A549 (cell line): ENCODE measurements at regions of chr20 and their contacts with region 1.

Region 1: GRCh38 chr20:40990542-40991120 is 38.0 kb upstream of the TOP1 start:
- DNase-seq: peak; percentile 85 to 91
- ATAC-seq: peak; percentile 99 to 100
- H3K4me3 ChIP-seq: no peak overlapping the region
- H3K27ac ChIP-seq: peak overlapping the region; percentile 62 to 84; a peak in 5 of 6 replicates
- H3K4me1 ChIP-seq: no peaks in the 10 kb centered on the region
- CTCF ChIP-seq: peak; percentile 85
- EP300 ChIP-seq: no peak
- POLR2A ChIP-seq: no peak
- RAD21 ChIP-seq: peak; percentile 88 to 89

Region 2: DNA sequence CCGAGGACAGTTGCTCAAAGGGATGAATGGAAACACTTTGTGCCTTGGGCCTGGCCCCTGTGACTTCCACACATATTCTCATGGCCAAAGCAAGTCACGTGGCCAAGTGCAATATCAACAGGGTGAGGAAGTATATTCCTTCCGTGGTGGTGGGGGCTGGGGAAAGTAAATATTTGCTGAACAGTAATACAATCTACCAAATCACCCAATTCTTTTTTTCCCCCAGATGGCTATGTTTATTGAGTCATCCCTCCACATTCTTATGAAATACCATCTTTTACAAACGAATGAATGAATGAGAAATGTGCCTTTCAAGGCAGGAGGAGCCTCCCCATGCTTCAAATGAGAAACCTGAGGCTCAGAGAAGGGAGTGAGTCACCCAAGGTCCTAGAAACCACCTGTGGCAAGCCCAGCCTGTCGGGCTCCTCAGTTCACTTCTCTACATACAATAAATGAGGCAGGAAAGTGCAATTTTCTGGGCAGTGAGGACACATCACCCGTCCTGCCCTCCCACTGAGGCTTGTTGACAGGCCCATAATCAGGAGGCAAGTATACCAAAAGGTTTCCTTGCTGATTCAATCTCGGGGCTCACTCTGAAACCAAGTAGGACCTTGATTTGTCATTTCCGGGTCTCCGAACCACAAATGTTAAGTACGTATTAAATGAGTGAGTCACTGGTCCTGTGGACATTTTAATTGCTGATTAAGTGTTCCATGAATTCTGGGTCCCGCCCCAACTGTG is 12.7 kb after region 1 on chr20:
- CTCF ChIA-PET with region 1: interaction called, 35 read pairs
- POLR2A ChIA-PET with region 1: interaction called, 4 read pairs
- DNase-seq: peak; percentile 90 to 92
- ATAC-seq: peak; percentile 86 to 97
- H3K4me3 ChIP-seq: no peak overlapping the region
- H3K27ac ChIP-seq: peak overlapping the region; percentile 84 to 89
- H3K4me1 ChIP-seq: peaks cover 47% of the 10 kb centered on the region
- CTCF ChIP-seq: no peak
- EP300 ChIP-seq: peak; percentile 71 to 82; a peak in 3 of 5 replicates
- POLR2A ChIP-seq: no peak
- RAD21 ChIP-seq: peak in 1 of 2 experiments; percentile 2; a peak in 2 of 5 replicates

Region 3: GRCh38 chr20:41028348-41029148 is 37.9 kb after region 1 on chr20 and contains the start of gene TOP1:
- CTCF ChIA-PET with region 1: interaction called, 28 read pairs
- POLR2A ChIA-PET with region 1: interaction called, 5 read pairs
- DNase-seq: peak; percentile 97 to 100
- ATAC-seq: peak; percentile 95 to 97
- H3K4me3 ChIP-seq: peak within 1 kb of the TSS; percentile 92
- H3K27ac ChIP-seq: peak within 1 kb of the TSS; percentile 86 to 98
- H3K4me1 ChIP-seq: peaks cover 40% of the 10 kb centered on the region
- CTCF ChIP-seq: no peak
- EP300 ChIP-seq: no peak
- POLR2A ChIP-seq: peak; percentile 87
- RAD21 ChIP-seq: no peak; a peak in 1 of 5 replicates
- polyA plus RNA-seq, gene TOP1: 20.8 and 28.3 TPM in 2 replicates

Region 4: GRCh38 chr20:41047975-41048305 is 57.3 kb after region 1 on chr20:
- CTCF ChIA-PET with region 1: interaction called, 22 read pairs
- POLR2A ChIA-PET with region 1: no interaction called
- DNase-seq: no peak
- ATAC-seq: peak in 1 of 2 experiments; percentile 46; a peak in 2 of 6 replicates
- H3K4me3 ChIP-seq: no peak overlapping the region; the same call in 2 of the 3 replicates
- H3K27ac ChIP-seq: peak overlapping the region; percentile 30 to 42; a peak in 4 of 6 replicates
- H3K4me1 ChIP-seq: peaks cover 70% of the 10 kb centered on the region
- CTCF ChIP-seq: no peak
- EP300 ChIP-seq: no peak
- POLR2A ChIP-seq: no peak
- RAD21 ChIP-seq: no peak

Region 5: GRCh38 chr20:41095110-41095969 is 104.7 kb after region 1 on chr20:
- CTCF ChIA-PET with region 1: interaction called, 208 read pairs
- POLR2A ChIA-PET with region 1: no interaction called
- DNase-seq: peak; percentile 53 to 64
- ATAC-seq: peak; percentile 86 to 87
- H3K4me3 ChIP-seq: no peak overlapping the region
- H3K27ac ChIP-seq: no peak overlapping the region
- H3K4me1 ChIP-seq: no peaks in the 10 kb centered on the region
- CTCF ChIP-seq: peak; percentile 91
- EP300 ChIP-seq: no peak
- POLR2A ChIP-seq: no peak
- RAD21 ChIP-seq: peak; percentile 79 to 81

Region 6: DNA sequence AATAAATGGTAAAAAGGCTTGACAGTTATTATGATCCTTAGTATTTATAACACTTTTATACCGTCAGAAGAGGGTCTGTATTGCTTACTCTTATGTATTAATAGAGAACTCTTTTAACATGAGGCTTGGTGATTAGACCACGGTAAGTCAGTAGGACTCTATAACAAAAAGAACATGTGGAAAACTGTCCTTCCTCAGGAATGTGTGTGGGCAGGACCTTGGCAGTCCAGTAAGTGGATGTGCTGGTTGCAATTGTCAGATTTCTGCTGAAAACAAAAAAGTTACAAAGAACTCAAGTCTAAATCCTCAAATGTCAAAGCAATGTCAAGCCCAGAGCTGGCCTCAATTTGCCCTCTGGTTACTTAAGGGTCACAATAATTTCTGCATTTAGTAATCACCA is 227.8 kb after region 1 on chr20:
- CTCF ChIA-PET with region 1: no interaction called
- POLR2A ChIA-PET with region 1: no interaction called
- DNase-seq: no peak
- ATAC-seq: no peak
- H3K4me3 ChIP-seq: no peak overlapping the region
- H3K27ac ChIP-seq: no peak overlapping the region
- H3K4me1 ChIP-seq: no peaks in the 10 kb centered on the region
- CTCF ChIP-seq: no peak
- EP300 ChIP-seq: no peak
- POLR2A ChIP-seq: no peak
- RAD21 ChIP-seq: no peak